Ascending aorta (tissue), 2 donors: ENCODE measurements at regions of chr2 and their contacts with region 1.

Region 1: DNA sequence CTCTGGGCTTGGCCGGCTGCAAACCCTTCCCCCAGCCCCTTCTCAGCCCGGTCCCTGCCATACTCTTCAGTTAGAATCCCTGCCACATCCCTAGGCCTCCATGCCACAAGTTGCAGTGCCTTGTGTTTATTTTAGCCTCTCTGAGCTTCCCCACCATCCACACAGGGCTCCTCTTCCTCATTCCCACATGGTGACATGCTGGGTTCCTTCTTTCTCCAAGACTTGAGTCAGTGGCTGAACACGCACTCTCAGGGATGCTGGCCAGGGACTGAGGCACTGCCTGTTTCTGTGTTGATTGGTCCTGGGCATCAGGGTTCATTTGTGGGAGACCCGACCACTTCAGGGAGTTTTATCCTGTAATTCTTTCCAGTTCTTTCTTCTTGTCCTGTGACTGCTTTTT is 56.3 kb downstream of the KCNS3 start:
- DNase-seq: peak; percentile 69 to 93
- H3K4me3 ChIP-seq: peak overlapping the region in 1 of 2 donors; percentile 59
- H3K27ac ChIP-seq: peak overlapping the region; percentile 86 to 91
- H3K4me1 ChIP-seq: peaks cover 0 to 23% of the 10 kb centered on the region in 2 donors
- H3K27me3 ChIP-seq: no peaks in the 10 kb centered on the region
- CTCF ChIP-seq: no peak

Region 2: DNA sequence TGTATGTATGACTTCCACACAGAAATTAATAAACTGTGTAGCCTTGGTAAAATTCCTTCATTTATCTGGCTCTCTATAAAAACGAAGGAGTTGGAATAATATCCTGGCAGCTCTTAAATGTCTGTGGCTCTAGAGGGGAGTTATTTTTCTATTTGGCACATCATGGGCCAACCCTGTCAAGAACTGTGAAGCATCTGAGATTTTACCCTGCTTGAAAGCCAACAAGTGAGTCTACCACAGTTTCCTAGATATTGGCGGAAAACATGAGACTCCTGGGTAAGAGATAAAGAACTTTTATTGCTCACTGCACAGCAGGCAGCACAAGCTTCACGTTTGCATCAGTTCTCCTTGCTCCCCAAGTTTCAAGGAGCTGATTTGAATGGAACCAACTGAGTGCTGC is 922.4 kb before region 1 on chr2:
- intact Hi-C with region 1: no loop called
- DNase-seq: no peak
- H3K4me3 ChIP-seq: no peak overlapping the region
- H3K27ac ChIP-seq: no peak overlapping the region
- H3K4me1 ChIP-seq: no peaks in the 10 kb centered on the region
- H3K27me3 ChIP-seq: no peaks in the 10 kb centered on the region
- CTCF ChIP-seq: no peak

Region 3: DNA sequence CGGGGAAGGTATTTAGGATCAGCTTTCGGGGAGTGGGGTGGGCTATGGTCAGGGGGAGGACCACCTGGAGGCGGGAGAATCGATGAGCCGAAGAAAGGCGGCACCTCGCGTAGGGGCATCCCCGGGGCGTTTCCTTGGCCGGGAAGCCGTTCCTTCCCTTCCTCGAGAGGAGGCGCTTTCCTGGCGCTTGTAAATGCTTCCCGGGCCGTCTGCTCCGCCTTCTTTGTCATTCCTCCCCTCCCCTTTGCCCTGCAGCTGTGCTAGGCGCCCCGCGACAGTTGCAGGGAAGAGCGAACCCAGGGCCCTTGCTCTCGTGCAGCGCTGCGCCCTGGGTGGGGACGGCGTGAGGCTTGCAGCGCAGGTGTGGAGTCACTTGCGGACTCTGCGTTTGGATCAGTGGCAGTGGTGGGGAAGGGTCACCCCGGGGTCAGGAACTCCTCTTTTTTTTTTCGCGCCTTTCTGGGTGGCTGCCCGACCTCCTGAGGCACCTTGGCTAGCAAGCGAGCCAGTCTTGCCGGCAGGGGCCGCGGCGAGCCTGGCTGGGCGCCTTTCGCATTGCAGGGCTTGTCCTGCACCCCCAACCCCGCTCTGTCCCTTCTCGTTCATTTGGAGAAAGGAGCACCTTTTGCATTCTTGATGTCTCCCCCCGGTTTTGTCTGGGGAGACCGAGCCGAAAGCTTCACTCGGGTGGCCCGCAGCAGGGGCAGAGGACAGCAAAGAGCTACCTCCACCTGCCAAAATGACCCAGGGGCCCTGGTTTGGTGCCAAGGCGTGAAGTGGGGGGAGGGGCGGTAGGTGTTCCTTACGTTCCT is 55.4 kb before region 1 on chr2:
- intact Hi-C with region 1: loop called (anchors 2 kb)
- DNase-seq: peak in 1 of 2 donors; percentile 84
- H3K4me3 ChIP-seq: peak overlapping the region; percentile 79 to 93
- H3K27ac ChIP-seq: peak overlapping the region; percentile 64 to 81
- H3K4me1 ChIP-seq: peaks cover 0 to 7% of the 10 kb centered on the region in 2 donors
- H3K27me3 ChIP-seq: no peaks in the 10 kb centered on the region
- CTCF ChIP-seq: peak; percentile 13 to 40 (median 24)